ENCODE measurements at regions of chr20 and their contacts with region 1.

Region 1: DNA sequence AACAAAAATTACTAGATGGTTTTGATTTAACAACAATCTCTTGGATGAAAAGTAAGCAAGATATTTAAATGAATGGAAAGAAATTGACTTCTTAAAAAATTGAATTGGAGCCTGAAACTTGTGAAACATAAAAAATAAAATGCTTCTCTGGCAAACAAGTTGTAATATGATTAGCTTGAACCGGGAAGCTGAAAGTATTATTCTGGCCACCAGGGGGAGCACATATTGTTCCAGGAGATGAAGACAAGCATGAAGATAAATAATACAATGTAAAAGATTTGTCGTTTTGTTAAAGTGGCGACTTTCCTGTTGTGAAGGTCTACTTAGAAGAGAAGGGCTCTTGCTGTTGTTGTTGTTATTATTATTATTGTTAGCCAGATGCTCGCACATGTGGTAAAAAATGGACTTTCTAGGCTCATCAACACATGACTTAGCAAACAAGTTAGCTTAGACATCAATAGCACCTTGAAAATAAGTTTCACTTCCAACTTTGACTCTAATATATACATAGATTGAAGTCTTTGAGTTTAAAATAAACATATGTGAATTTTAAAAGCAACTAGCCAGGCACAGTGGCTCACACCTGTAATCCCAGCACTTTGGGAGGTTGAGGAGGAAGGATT is 14.2 kb downstream of the PAX1 start:
- DNase-seq: peak; percentile 20
- H3K4me3 ChIP-seq: no peak overlapping the region
- H3K27ac ChIP-seq: no peak overlapping the region
- H3K27me3 ChIP-seq: peaks cover 5% of the 10 kb centered on the region
- CTCF ChIP-seq: peak; percentile 78

Region 2: GRCh38 chr20:21709535-21709904 is 10.2 kb before region 1 on chr20:
- CTCF ChIA-PET with region 1: interaction called, 17 read pairs
- POLR2A ChIA-PET with region 1: no interaction called
- DNase-seq: no peak
- H3K4me3 ChIP-seq: no peak overlapping the region
- H3K27ac ChIP-seq: no peak overlapping the region
- H3K27me3 ChIP-seq: peaks cover 45% of the 10 kb centered on the region
- CTCF ChIP-seq: no peak

Region 3: GRCh38 chr20:22008456-22008855 is 288.8 kb after region 1 on chr20:
- CTCF ChIA-PET with region 1: no interaction called
- POLR2A ChIA-PET with region 1: no interaction called
- DNase-seq: no peak
- H3K4me3 ChIP-seq: no peak overlapping the region
- H3K27ac ChIP-seq: no peak overlapping the region
- H3K27me3 ChIP-seq: no peaks in the 10 kb centered on the region
- CTCF ChIP-seq: no peak

Region 4: GRCh38 chr20:22312744-22313346 is 593.1 kb after region 1 on chr20:
- CTCF ChIA-PET with region 1: interaction called, 58 read pairs
- POLR2A ChIA-PET with region 1: no interaction called
- DNase-seq: peak; percentile 4
- H3K4me3 ChIP-seq: no peak overlapping the region
- H3K27ac ChIP-seq: no peak overlapping the region
- H3K27me3 ChIP-seq: no peaks in the 10 kb centered on the region
- CTCF ChIP-seq: peak; percentile 62